ENCODE measurements at regions of chr16 and their contacts with region 1.

Region 1: DNA sequence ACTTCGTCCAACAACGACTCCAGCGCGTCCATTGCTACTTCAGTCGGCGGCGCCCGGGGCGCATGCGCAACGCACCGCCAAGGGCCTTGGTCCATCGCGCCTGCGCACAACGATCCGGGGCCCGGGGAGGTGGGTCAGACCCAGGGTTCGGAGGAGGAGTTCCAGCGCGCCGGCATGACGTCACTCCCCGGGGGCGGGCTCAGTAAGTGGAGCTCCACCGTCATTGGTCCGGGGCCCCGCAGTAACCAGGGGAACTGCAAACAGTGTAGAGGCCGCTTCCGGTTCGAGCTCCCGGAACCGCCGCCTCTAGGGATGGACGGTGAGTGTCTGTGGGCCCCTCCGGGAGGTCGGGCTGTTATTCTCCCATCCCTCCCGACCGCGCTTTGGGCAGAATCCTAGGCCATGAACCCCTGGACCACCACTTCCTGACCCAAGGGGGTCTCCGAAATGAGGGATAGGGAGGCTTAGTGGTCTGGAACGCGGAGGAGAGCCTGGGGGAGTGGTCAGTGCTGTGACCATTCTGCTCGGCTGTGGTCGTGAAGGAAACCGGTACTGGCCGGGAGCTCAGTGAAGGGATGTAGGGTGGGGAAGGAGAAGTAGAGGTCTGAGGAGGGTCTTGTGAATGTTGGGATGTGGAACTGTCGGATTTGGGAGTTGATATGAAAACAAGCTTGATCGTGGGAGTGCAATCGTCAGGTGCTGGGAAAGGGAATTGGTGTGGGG is at the starts of genes GTF3C1 and KATNIP:
- DNase-seq: peak; percentile 100
- ATAC-seq: peak; percentile 100
- H3K4me3 ChIP-seq: peak within 1 kb of the TSS; percentile 82 to 98 (median 95)
- H3K4me3 Mint-ChIP-seq: peak within 1 kb of the TSS; percentile 99
- H3K27ac ChIP-seq: peak within 1 kb of the TSS; percentile 80 to 99
- H3K27ac Mint-ChIP-seq: peak within 1 kb of the TSS; percentile 97
- H3K4me1 ChIP-seq: peaks cover 13 to 22% of the 10 kb centered on the region in 2 donors
- H3K4me1 Mint-ChIP-seq: peaks cover 33% of the 10 kb centered on the region
- H3K27me3 ChIP-seq: no peaks in the 10 kb centered on the region
- H3K27me3 Mint-ChIP-seq: no peaks in the 10 kb centered on the region
- CTCF ChIP-seq: no peak
- total RNA-seq, gene GTF3C1: 49.6 and 64.1 TPM in 2 replicates
- total RNA-seq, gene KATNIP: 49.9 and 56.0 TPM in 2 replicates

Region 2: GRCh38 chr16:26133416-26134093 is 1416.5 kb before region 1 on chr16:
- CTCF ChIA-PET with region 1: no interaction called
- POLR2A ChIA-PET with region 1: interaction called, 15 read pairs
- intact Hi-C with region 1: no loop called
- DNase-seq: no peak
- ATAC-seq: no peak
- H3K4me3 ChIP-seq: no peak overlapping the region
- H3K4me3 Mint-ChIP-seq: no peak overlapping the region
- H3K27ac ChIP-seq: no peak overlapping the region
- H3K27ac Mint-ChIP-seq: no peak overlapping the region
- H3K4me1 ChIP-seq: no peaks in the 10 kb centered on the region
- H3K4me1 Mint-ChIP-seq: no peaks in the 10 kb centered on the region
- H3K27me3 ChIP-seq: peaks cover 0 to 2% (median 0%) of the 10 kb centered on the region in 4 experiments
- H3K27me3 Mint-ChIP-seq: peaks cover 5% of the 10 kb centered on the region
- CTCF ChIP-seq: no peak

Region 3: DNA sequence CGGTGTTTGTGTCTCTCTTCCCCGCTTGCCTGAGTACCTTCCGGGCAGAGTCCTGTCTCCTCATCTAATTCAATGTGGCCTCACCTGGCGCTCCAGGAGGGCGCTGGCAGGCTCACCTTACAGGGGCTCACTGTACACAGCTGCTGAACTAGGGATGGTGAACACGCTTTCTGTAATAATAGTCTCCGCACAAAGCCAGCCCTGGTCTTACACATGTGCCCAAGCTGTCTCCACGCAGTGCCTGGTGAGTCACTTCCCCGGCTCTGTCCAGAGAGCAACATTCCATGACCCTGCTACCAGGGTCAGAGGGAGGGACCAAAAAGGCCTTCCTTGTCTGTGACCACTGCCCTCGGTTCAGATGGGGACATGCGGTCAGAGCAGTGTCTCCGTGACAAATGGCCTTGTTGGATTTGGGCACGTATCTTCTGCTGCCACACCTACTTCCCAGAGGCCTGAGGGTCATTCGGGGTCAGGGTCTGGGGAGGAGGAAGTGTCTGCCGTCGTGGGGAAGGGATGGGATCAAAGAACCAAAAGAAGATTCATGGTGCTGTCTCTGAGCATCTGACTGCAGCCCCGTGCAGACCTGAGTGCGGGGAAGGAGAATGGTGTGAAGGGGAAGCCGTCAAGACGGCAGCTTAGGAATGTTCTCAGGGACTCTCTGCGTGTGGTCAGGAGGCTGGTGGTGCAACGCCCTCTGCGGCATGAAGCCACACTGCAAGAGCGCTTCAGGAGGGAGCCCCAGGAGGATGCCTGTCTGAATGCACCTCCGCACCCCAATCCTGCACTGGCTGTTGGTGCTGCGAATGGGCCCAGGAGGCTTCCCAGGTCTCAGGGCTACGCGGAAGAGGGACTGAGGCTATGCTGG is 79.2 kb before region 1 on chr16:
- CTCF ChIA-PET with region 1: no interaction called
- POLR2A ChIA-PET with region 1: no interaction called
- intact Hi-C with region 1: no loop called
- DNase-seq: no peak
- ATAC-seq: no peak
- H3K4me3 ChIP-seq: no peak overlapping the region
- H3K4me3 Mint-ChIP-seq: no peak overlapping the region
- H3K27ac ChIP-seq: no peak overlapping the region
- H3K27ac Mint-ChIP-seq: no peak overlapping the region
- H3K4me1 ChIP-seq: no peaks in the 10 kb centered on the region
- H3K4me1 Mint-ChIP-seq: no peaks in the 10 kb centered on the region
- H3K27me3 ChIP-seq: no peaks in the 10 kb centered on the region
- H3K27me3 Mint-ChIP-seq: no peaks in the 10 kb centered on the region
- CTCF ChIP-seq: no peak

Region 4: GRCh38 chr16:27712251-27712711 is 162.3 kb after region 1 on chr16:
- CTCF ChIA-PET with region 1: no interaction called
- POLR2A ChIA-PET with region 1: no interaction called
- intact Hi-C with region 1: no loop called
- DNase-seq: no peak
- ATAC-seq: no peak
- H3K4me3 ChIP-seq: no peak overlapping the region
- H3K4me3 Mint-ChIP-seq: no peak overlapping the region
- H3K27ac ChIP-seq: no peak overlapping the region
- H3K27ac Mint-ChIP-seq: no peak overlapping the region
- H3K4me1 ChIP-seq: no peaks in the 10 kb centered on the region
- H3K4me1 Mint-ChIP-seq: no peaks in the 10 kb centered on the region
- H3K27me3 ChIP-seq: no peaks in the 10 kb centered on the region
- H3K27me3 Mint-ChIP-seq: no peaks in the 10 kb centered on the region
- CTCF ChIP-seq: no peak